ENCODE measurements at regions of chr6 and their contacts with region 1.

Region 1: GRCh38 chr6:109009236-109009961 is 85.2 kb downstream of the SESN1 start:
- DNase-seq: peak; percentile 92
- H3K4me3 ChIP-seq: peak overlapping the region; percentile 87
- H3K27ac ChIP-seq: no peak overlapping the region
- H3K4me1 ChIP-seq: peaks cover 36% of the 10 kb centered on the region
- CTCF ChIP-seq: no peak

Region 2: DNA sequence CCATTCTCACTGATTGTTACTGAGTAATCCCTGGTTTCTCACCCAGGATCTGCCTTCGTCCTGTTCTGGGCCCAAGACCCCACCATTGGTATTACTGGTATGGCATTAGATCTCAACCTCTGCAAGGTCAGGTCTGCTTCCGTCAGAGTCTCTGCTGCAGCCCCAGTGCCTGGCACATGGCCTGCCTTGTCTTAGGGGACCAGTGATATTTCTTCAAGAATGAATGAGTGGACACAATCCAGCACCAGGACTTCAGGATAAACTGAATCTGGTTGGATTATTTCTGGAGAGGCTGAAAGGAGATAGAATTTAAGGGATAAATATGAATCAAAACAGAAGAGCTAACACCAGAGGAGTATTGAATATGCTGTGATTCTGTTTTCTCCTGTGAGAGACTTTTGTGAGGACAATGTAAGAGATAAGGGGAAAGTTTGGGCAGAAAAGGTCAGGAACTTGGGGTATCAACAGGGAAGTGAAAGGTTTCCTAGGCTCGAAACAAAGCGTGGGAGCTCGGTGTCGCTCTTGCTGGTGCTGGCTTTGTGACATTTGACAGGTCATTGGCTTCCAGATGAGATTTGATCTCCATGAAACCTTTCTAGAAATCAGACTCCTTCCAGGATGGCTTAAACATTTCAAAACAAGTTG is 988.8 kb before region 1 on chr6:
- CTCF ChIA-PET with region 1: no interaction called
- POLR2A ChIA-PET with region 1: no interaction called
- intact Hi-C with region 1: no loop called
- DNase-seq: no peak
- H3K4me3 ChIP-seq: no peak overlapping the region
- H3K27ac ChIP-seq: no peak overlapping the region
- H3K4me1 ChIP-seq: no peaks in the 10 kb centered on the region
- CTCF ChIP-seq: no peak

Region 3: GRCh38 chr6:109059571-109060021 is 50.2 kb after region 1 on chr6:
- CTCF ChIA-PET with region 1: no interaction called
- POLR2A ChIA-PET with region 1: interaction called, 4 read pairs
- intact Hi-C with region 1: loop called (anchors 5 kb)
- DNase-seq: peak; percentile 26
- H3K4me3 ChIP-seq: no peak overlapping the region
- H3K27ac ChIP-seq: no peak overlapping the region
- H3K4me1 ChIP-seq: peaks cover 30% of the 10 kb centered on the region
- CTCF ChIP-seq: peak; percentile 65

Region 4: GRCh38 chr6:109595998-109596397 is 586.6 kb after region 1 on chr6:
- CTCF ChIA-PET with region 1: no interaction called
- POLR2A ChIA-PET with region 1: no interaction called
- intact Hi-C with region 1: no loop called
- DNase-seq: peak; percentile 12
- H3K4me3 ChIP-seq: no peak overlapping the region
- H3K27ac ChIP-seq: no peak overlapping the region
- H3K4me1 ChIP-seq: no peaks in the 10 kb centered on the region
- CTCF ChIP-seq: peak; percentile 51

Measured in OCI-LY7 (cell line).